CD4-positive, alpha-beta T cell (primary cell): ENCODE measurements at regions of chr10 and their contacts with region 1.

Region 1: DNA sequence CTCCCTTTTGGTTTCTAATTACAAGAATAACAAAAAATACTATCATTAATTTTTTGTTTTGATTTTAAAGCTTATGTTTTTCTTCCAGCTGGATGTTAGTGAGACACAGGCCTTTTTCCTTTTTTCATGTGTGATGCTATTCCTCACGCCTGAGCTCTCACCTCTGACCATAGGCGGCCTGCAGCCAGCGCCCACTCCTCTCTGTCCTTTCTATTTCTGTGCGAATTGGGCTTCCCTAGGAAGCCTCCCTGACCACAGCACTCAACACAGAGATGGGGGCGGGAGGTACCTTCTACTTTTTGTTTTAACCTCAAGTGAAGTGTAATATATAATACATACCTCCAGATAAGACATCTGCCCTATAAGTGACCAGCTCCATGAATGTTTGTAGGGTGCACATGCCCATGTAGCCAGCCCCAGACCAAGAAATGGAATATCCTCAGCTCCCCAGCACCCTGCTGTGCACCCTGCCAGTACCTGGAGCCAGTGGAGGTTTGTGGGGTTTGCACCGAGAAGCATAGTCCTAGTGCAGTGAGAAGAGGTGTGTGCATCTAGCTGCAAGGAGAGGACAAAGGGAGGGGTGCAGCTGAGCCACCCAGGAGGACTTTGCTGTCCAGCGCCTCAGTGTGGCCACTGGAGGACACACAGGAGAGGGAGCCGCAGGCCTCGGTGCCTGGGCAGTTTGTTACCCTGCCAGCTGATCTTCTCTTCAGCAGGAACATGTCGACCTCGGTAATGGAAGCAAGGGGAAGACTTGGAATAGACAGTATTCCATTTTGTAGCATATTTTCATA is 38.5 kb downstream of the BNIP3 start:
- DNase-seq: peak in 7 of 14 experiments; percentile 11 to 54 (median 29)
- ATAC-seq: peak; percentile 61
- H3K4me3 ChIP-seq: no peak overlapping the region
- H3K4me3 Mint-ChIP-seq: no peak overlapping the region
- H3K27ac ChIP-seq: no peak overlapping the region
- H3K27ac Mint-ChIP-seq: peak overlapping the region; percentile 9
- H3K4me1 ChIP-seq: no peaks in the 10 kb centered on the region
- H3K4me1 Mint-ChIP-seq: peaks cover 19% of the 10 kb centered on the region
- H3K27me3 ChIP-seq: no peaks in the 10 kb centered on the region
- H3K27me3 Mint-ChIP-seq: no peaks in the 10 kb centered on the region
- CTCF ChIP-seq: peak; percentile 28

Region 2: GRCh38 chr10:131838948-131839742 is 104.1 kb before region 1 on chr10:
- CTCF ChIA-PET with region 1: no interaction called
- POLR2A ChIA-PET with region 1: no interaction called
- intact Hi-C with region 1: no loop called
- DNase-seq: peak in 1 of 14 experiments; percentile 21
- ATAC-seq: no peak
- H3K4me3 ChIP-seq: no peak overlapping the region
- H3K4me3 Mint-ChIP-seq: no peak overlapping the region
- H3K27ac ChIP-seq: no peak overlapping the region
- H3K27ac Mint-ChIP-seq: no peak overlapping the region
- H3K4me1 ChIP-seq: no peaks in the 10 kb centered on the region
- H3K4me1 Mint-ChIP-seq: no peaks in the 10 kb centered on the region
- H3K27me3 ChIP-seq: no peaks in the 10 kb centered on the region
- H3K27me3 Mint-ChIP-seq: peaks cover 4% of the 10 kb centered on the region
- CTCF ChIP-seq: no peak

Region 3: GRCh38 chr10:131885391-131886161 is 57.6 kb before region 1 on chr10:
- CTCF ChIA-PET with region 1: interaction called, 10 read pairs
- POLR2A ChIA-PET with region 1: no interaction called
- intact Hi-C with region 1: loop called (anchors 1 to 5 kb)
- DNase-seq: peak; percentile 69 to 90 (median 82)
- ATAC-seq: peak; percentile 100
- H3K4me3 ChIP-seq: no peak overlapping the region
- H3K4me3 Mint-ChIP-seq: no peak overlapping the region
- H3K27ac ChIP-seq: no peak overlapping the region
- H3K27ac Mint-ChIP-seq: no peak overlapping the region
- H3K4me1 ChIP-seq: peaks cover 13% of the 10 kb centered on the region
- H3K4me1 Mint-ChIP-seq: peaks cover 12% of the 10 kb centered on the region
- H3K27me3 ChIP-seq: peaks cover 0 to 3% of the 10 kb centered on the region in 2 experiments
- H3K27me3 Mint-ChIP-seq: peaks cover 9% of the 10 kb centered on the region
- CTCF ChIP-seq: peak; percentile 96

Region 4: GRCh38 chr10:131909014-131909808 is 34.0 kb before region 1 on chr10:
- CTCF ChIA-PET with region 1: interaction called, 12 read pairs
- POLR2A ChIA-PET with region 1: interaction called, 3 read pairs
- intact Hi-C with region 1: no loop called
- DNase-seq: peak in 1 of 14 experiments; percentile 29
- ATAC-seq: no peak
- H3K4me3 ChIP-seq: no peak overlapping the region
- H3K4me3 Mint-ChIP-seq: peak overlapping the region; percentile 86
- H3K27ac ChIP-seq: peak overlapping the region; percentile 28 to 46
- H3K27ac Mint-ChIP-seq: peak overlapping the region; percentile 96
- H3K4me1 ChIP-seq: peaks cover 76% of the 10 kb centered on the region
- H3K4me1 Mint-ChIP-seq: peaks cover 92% of the 10 kb centered on the region
- H3K27me3 ChIP-seq: no peaks in the 10 kb centered on the region
- H3K27me3 Mint-ChIP-seq: no peaks in the 10 kb centered on the region
- CTCF ChIP-seq: no peak

Region 5: DNA sequence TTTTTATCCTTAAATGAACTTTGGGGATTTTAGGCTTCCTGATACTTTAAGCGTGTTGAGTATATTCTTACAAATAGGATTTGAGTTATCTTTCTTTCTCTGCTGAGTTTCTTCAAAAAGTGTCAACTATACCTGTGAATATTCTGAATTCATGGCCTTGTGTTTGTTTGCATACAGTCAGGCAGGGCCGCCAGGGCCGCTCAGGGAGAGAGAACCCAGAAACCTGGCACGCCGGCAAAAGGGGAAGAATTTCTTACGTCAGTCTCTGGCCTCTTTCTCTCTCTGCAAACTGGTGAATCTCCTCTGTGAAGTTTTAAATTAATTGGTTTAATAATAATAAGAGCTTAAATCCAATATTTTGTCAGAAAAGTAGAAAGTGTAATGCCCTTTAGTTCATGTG is 67.8 kb after region 1 on chr10:
- CTCF ChIA-PET with region 1: no interaction called
- POLR2A ChIA-PET with region 1: no interaction called
- intact Hi-C with region 1: no loop called
- DNase-seq: no peak
- ATAC-seq: no peak
- H3K4me3 ChIP-seq: no peak overlapping the region
- H3K4me3 Mint-ChIP-seq: no peak overlapping the region
- H3K27ac ChIP-seq: no peak overlapping the region
- H3K27ac Mint-ChIP-seq: no peak overlapping the region
- H3K4me1 ChIP-seq: no peaks in the 10 kb centered on the region
- H3K4me1 Mint-ChIP-seq: no peaks in the 10 kb centered on the region
- H3K27me3 ChIP-seq: no peaks in the 10 kb centered on the region
- H3K27me3 Mint-ChIP-seq: peaks cover 13% of the 10 kb centered on the region
- CTCF ChIP-seq: no peak

Region 6: DNA sequence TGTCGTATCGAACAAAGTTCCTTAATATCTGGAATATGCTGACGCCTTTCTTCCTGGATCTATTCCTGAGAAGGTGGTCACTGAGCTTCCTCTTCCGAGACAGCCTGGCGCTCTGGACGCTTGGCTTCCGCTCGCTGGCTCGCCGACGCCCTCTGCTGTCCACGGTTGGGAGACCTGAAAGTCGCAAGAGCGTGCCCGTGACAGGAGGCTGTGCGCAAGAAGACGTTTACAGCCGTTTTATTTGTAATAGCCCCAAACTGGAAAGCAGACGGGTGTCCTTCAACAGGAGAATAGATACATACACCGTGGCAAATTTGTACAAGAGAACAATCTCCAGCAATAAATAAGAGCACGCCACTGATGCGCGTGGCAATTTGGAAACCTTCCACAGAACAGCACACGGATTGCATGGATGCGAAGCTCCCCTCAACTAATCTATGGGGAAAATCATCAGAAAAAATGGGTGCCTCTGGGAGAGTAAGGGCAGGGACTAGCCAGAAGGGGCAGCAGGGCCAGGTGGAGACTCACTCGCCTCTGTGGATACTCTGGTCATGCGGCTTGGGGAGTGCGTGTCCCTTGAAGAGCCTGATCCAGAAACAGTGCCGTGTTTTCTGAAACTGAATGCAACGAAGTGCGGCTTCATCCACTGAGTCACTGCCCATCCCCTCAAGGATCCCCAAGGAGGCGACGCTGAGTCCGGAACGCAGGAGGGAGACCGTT is 80.0 kb after region 1 on chr10:
- CTCF ChIA-PET with region 1: interaction called, 9 read pairs
- POLR2A ChIA-PET with region 1: no interaction called
- intact Hi-C with region 1: loop called in 1 of 2 experiments (anchors 5 kb)
- DNase-seq: peak; percentile 58 to 88 (median 75)
- ATAC-seq: peak; percentile 88
- H3K4me3 ChIP-seq: no peak overlapping the region
- H3K4me3 Mint-ChIP-seq: no peak overlapping the region
- H3K27ac ChIP-seq: no peak overlapping the region
- H3K27ac Mint-ChIP-seq: no peak overlapping the region
- H3K4me1 ChIP-seq: peaks cover 9% of the 10 kb centered on the region
- H3K4me1 Mint-ChIP-seq: peaks cover 6% of the 10 kb centered on the region
- H3K27me3 ChIP-seq: peaks cover 0 to 24% of the 10 kb centered on the region in 2 experiments
- H3K27me3 Mint-ChIP-seq: peaks cover 45% of the 10 kb centered on the region
- CTCF ChIP-seq: peak; percentile 92